ENCODE measurements at regions of chr22 and their contacts with region 1.

Region 1: DNA sequence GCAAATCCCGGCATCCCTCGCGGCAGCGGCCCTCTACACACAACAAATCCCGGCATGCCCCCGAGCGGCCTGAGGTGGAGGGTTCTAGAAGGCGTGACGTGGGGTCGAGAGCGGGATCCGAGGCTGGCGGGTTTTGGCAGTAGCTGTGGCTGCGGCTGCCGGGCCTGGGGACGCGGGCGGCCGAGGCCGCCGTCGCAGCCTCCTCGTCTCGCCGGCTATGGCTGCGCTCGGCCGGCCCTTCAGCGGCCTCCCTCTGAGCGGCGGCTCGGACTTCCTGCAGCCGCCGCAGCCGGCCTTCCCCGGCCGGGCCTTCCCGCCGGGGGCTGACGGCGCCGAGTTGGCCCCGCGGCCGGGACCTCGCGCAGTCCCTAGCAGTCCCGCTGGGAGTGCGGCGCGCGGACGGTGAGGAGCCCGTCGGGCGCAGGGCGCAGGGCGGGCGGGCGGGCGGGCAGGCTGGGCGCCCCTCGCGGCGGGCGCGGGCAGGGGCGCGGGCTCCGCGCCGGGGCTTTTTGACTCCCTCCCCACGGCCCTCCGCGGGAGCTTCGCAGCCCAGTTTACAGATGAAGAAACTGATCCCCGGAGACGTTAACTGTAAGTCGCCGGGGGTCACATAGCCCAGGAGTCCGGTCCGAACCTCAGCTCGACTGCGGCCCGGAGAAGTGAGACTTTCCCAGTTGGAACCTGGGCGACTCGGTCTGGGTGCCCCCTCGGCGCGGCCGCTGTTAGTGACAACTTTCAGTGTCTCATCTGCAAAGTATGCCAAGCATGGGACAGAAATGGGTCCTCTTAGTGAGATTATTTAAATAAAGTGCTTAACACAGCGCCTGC is at the start of gene CCDC117:
- DNase-seq: peak; percentile 98
- H3K4me3 ChIP-seq: peak within 1 kb of the TSS; percentile 78
- H3K27ac ChIP-seq: peak within 1 kb of the TSS; percentile 97
- H3K4me1 ChIP-seq: no peaks in the 10 kb centered on the region
- H3K27me3 ChIP-seq: no peaks in the 10 kb centered on the region
- CTCF ChIP-seq: peak; percentile 38
- total RNA-seq, gene CCDC117: 30.8 and 33.5 TPM in 2 replicates

Region 2: DNA sequence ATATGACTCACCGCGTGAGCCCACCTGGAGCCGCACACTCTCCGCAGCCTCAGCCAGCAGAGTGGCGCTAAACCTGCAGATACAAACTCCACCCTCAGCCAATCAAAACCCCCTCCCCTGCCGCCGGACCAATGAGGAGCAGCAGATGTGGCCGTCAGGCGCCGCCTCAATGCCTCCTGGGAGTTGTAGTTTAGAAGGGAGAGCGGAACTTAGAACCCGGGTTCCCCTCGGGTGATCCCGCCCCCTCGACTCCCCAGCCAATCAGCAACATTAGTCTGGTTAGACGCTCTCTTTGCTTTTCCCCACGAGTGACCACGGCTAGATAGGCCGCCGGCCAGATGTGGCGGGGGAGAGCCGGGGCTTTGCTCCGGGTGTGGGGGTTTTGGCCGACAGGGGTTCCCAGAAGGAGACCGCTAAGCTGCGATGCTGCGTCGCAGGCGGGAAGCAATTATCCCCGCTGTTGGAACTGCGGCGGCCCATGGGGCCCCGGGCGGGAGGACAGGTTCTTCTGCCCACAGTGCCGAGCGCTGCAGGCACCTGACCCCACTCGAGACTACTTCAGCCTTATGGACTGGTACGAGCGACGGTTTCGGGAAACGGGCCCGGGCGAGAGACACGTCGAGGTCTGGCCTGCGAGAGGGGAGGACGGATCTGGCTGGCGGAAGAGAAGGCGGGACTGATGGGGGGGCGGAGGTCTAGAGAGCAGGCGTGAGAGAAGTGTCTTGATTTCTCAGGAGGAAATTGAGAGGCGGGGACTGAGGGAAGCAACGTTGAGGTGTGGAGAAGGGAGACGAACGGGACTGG is 30.9 kb before region 1 on chr22 and contains the starts of genes CHEK2 and HSCB:
- CTCF ChIA-PET with region 1: no interaction called
- POLR2A ChIA-PET with region 1: no interaction called
- intact Hi-C with region 1: loop called (anchors 1 kb)
- DNase-seq: peak; percentile 100
- H3K4me3 ChIP-seq: peak within 1 kb of the TSS; percentile 79
- H3K27ac ChIP-seq: peak within 1 kb of the TSS; percentile 94
- H3K4me1 ChIP-seq: peaks cover 7% of the 10 kb centered on the region
- H3K27me3 ChIP-seq: no peaks in the 10 kb centered on the region
- CTCF ChIP-seq: peak; percentile 40; the same call in 1 of the 2 replicates
- total RNA-seq, gene CHEK2: 53.7 and 65.8 TPM in 2 replicates
- total RNA-seq, gene HSCB: 19.6 and 22.5 TPM in 2 replicates